ENCODE measurements at regions of chr6 and their contacts with region 1.

Region 1: DNA sequence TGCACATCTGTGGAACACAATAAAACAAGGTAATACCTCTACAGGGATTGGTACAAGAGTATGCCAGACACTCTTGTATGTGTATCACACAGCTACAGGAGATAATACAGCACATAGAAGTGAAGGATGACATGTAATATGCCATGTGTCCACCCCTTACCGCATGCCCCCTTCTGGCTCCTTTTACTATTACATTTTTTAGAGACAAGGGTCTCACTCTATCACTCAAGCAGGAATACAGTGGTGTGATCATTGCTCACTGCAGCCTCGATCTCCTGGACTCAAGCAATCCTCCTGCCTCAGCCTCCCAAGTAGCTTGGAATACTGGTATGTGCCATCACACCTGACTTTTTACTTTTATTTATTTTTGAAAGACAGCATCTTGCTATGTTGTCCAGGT is 4.2 kb upstream of the NCR3 start:
- DNase-seq: no peak
- CTCF ChIP-seq: peak; percentile 36

Region 2: DNA sequence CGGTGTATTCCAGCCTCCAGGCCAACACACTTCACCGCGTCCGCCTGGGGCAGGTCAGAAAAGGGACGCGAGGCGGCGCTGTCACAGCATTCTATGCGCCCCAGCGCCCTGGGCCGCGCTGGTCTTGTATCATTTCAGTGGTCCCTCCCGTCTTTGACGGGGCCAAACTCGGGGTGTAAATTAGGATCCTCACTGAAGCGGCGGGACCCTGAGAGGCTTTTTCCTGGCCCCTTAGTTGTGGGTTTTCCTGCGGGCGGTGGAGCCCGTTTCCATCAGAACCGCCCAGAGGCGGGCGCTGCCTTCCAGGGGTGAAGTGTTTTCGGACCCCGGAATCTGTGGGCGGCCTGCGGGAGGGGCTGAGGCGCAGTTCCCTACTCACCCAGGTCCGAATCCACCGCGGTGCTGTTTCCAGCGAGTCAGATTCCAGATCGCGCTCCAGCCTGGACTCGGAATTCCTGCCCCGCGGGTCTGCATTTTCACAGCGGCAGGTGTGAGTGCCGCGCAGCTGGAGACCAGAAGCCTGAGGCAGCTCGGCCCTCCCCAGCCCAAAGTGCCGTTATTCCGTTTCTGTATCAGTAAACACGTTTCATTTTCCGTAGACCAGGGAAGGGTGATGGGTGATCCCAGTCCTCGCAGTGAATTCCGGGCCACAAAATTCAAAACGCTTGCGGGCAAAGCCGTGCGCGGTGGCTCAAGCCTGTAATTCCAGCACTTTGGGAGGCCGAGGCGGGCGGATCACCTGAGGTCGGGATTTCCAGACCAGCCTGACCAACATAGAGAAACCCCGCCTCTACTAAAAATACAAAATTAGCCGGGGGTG is 102.9 kb before region 1 on chr6:
- CTCF ChIA-PET with region 1: interaction called, 34 read pairs
- POLR2A ChIA-PET with region 1: no interaction called
- DNase-seq: peak; percentile 64
- CTCF ChIP-seq: peak; percentile 92

Region 3: DNA sequence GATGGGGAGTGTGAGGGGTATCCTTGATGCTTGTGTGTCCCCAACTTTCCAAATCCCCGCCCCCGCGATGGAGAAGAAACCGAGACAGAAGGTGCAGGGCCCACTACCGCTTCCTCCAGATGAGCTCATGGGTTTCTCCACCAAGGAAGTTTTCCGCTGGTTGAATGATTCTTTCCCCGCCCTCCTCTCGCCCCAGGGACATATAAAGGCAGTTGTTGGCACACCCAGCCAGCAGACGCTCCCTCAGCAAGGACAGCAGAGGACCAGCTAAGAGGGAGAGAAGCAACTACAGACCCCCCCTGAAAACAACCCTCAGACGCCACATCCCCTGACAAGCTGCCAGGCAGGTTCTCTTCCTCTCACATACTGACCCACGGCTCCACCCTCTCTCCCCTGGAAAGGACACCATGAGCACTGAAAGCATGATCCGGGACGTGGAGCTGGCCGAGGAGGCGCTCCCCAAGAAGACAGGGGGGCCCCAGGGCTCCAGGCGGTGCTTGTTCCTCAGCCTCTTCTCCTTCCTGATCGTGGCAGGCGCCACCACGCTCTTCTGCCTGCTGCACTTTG is 21.6 kb before region 1 on chr6 and contains the start of gene TNF:
- CTCF ChIA-PET with region 1: interaction called, 2,725 read pairs
- POLR2A ChIA-PET with region 1: interaction called, 66 read pairs
- DNase-seq: peak; percentile 81
- CTCF ChIP-seq: no peak

Region 4: DNA sequence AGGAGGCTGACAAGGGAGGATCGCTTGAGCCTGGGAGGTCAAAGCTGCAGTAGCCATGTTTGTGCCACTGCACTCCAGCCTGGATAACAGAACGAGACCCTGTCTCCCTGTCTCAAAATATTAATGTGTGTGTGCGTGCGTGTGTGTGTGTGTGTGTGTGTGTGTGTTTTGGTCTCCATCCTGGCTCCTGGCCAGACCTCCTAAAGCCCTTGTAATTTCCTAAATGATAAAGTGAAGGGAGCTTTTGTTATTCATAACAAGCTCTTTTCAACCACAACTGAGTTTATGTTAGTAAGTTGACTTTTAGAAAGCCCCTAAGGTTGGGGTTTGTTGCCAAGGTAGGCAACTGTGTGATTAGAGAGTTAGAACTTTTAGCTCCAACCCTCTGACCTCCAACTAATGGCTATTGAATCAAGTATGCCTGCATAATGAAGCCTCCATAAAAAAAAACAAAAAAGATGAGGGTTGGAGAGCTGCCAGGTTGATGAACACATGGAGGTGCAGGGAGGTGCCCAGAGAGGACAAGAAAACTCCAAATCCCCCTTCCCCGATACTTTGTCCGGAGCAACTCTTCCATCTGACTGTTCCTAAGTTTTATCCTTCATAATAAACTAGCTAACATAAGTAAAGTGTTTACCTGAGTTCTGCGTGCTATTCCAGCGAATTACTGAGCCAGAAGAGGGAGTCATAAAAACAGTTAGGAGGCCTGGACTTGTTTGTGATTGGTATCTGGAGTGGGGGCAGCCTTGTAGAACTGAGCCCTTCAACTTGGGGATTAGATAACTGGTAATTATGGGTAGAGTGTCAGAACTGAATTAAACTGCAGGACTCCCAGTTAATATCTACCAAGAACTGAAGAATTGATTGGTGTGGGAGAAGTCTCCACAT is 12.8 kb after region 1 on chr6:
- CTCF ChIA-PET with region 1: interaction called, 2,725 read pairs
- POLR2A ChIA-PET with region 1: no interaction called
- DNase-seq: no peak
- CTCF ChIP-seq: no peak

Region 5: DNA sequence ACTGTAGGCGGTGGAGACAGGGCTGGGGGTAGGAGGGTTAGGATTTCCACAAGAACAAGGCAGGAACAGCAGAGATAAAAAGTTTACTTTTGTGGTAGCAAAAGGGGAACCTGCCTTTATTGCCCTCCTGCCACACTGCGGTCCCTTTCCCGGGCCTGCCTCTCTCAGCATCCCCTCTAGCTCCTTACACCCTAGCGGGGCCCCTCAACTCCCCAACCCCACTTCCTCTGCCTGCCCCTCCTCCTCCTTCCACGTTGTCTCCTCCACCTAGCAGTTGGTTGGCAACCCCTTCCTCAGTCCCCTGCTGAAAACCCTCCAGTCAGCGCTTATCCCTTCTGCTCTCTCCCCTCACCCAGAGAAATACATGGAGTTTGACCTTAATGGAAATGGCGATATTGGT is 18.7 kb after region 1 on chr6:
- CTCF ChIA-PET with region 1: interaction called, 2,725 read pairs
- POLR2A ChIA-PET with region 1: interaction called, 3 read pairs
- DNase-seq: no peak
- CTCF ChIP-seq: no peak

Region 6: DNA sequence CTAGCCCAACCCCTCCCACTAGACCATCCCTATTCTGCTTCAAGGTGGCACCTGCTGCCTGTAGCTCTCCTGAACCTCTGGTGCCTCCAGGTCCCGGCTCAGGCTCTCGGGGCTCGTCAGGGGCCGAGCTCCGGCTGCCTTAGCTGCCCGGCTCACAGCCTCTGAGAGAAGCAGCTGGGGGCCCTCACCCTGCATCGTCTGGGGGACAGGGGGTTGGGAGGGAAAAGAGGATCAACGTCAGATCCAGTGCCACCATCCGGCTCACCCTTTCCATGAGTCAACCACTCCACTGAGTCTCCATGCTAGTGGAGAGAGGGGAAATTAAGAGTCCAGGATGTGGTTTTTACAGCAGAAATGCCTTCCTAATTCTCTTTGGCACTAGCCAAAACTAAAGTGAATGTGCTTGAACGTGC is 42.4 kb after region 1 on chr6:
- CTCF ChIA-PET with region 1: interaction called, 15 read pairs
- POLR2A ChIA-PET with region 1: no interaction called
- DNase-seq: no peak
- CTCF ChIP-seq: no peak

Measured in GM10248 (cell line).